Activated B cell treated with CpG ODN at 0.5 μM for 24 hours (primary cell): ENCODE measurements at regions of chr10 and their contacts with region 1.

Region 1: GRCh38 chr10:48656241-48656913 is 28.3 kb upstream of the WDFY4 start:
- DNase-seq: peak; percentile 99
- ATAC-seq: peak; percentile 93
- H3K4me3 Mint-ChIP-seq: peak overlapping the region; percentile 81
- H3K27ac Mint-ChIP-seq: no peak overlapping the region
- H3K4me1 Mint-ChIP-seq: peaks cover 48% of the 10 kb centered on the region
- H3K27me3 Mint-ChIP-seq: peaks cover 6% of the 10 kb centered on the region
- CTCF ChIP-seq: peak; percentile 97

Region 2: GRCh38 chr10:48551861-48552591 is 104.4 kb before region 1 on chr10:
- CTCF ChIA-PET with region 1: interaction called, 301 read pairs
- POLR2A ChIA-PET with region 1: interaction called, 9 read pairs
- intact Hi-C with region 1: loop called (anchors 1 kb)
- DNase-seq: peak; percentile 27
- ATAC-seq: peak; percentile 89
- H3K4me3 Mint-ChIP-seq: no peak overlapping the region
- H3K27ac Mint-ChIP-seq: no peak overlapping the region
- H3K4me1 Mint-ChIP-seq: peaks cover 11% of the 10 kb centered on the region
- H3K27me3 Mint-ChIP-seq: peaks cover 5% of the 10 kb centered on the region
- CTCF ChIP-seq: no peak

Region 3: GRCh38 chr10:48623607-48624132 is 32.7 kb before region 1 on chr10:
- CTCF ChIA-PET with region 1: interaction called, 46 read pairs
- POLR2A ChIA-PET with region 1: interaction called, 9 read pairs
- intact Hi-C with region 1: no loop called
- DNase-seq: no peak
- ATAC-seq: no peak
- H3K4me3 Mint-ChIP-seq: no peak overlapping the region
- H3K27ac Mint-ChIP-seq: no peak overlapping the region
- H3K4me1 Mint-ChIP-seq: peaks cover 36% of the 10 kb centered on the region
- H3K27me3 Mint-ChIP-seq: peaks cover 1% of the 10 kb centered on the region
- CTCF ChIP-seq: no peak

Region 4: DNA sequence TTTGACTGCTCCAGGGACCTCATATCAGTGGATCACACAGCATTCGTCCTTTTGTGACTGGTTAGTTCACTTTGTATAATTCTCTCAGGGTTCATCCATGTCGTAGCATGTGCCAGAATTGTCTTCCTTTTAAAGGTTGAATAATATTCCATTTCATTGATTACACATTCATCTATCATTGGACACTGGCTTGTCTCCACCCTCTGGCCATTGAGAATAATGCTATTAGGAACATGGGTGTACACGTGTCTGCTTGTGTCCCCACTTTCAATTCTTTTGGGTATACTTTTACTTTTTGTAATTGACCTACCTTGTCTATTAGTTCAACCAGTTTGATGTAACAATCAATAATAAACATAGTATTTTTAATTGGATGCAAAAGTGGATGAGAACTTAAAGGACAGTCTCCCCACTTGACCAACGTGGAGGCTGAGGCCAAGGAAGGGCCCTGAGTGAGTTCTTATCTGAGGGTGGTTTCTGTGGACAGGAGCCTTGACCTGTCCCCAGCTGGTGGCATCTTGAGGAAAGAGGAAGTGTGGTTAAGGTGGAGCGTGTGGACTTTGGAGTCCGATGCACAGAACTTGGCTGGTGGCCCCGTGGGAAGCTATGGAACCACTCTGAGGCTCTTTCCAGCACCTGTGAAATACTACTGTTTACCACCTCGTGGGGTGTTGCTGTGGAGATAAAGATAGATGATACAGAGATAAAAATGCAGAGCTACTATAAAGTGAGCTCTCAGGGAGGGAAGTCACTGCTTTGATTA is 44.9 kb after region 1 on chr10:
- CTCF ChIA-PET with region 1: interaction called, 228 read pairs
- POLR2A ChIA-PET with region 1: interaction called, 5 read pairs
- intact Hi-C with region 1: loop called (anchors 1 kb)
- DNase-seq: no peak
- ATAC-seq: peak; percentile 44
- H3K4me3 Mint-ChIP-seq: peak overlapping the region; percentile 26
- H3K27ac Mint-ChIP-seq: peak overlapping the region; percentile 80
- H3K4me1 Mint-ChIP-seq: peaks cover 98% of the 10 kb centered on the region
- H3K27me3 Mint-ChIP-seq: no peaks in the 10 kb centered on the region
- CTCF ChIP-seq: no peak

Region 5: DNA sequence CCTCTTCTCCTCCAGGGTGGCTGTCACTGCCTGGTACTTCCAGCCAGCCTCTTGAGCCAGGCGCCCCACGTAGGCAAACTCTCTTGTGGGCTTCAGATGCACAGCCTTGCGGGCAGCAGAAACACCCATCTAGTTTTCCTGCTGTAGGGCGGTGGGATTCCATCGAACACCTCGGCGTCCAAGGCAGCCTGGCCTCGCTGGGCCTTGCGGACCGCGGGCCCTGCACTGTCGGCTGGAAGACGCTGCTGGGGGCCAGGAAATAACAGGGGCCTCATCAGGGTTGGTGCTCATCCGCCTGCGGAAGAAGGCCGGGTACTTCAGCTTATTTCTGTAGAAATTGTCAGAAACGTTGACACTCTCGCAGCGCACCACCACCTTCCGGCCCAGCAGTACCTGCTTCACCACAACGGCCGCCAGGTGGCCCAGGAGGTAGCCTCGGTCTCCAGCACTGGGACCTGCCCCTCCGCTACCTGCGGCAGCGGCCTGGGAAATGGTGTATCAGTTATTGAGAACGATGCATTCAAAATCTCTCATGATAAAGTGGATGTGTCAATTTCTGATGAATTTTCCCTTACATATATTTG is 89.4 kb after region 1 on chr10:
- CTCF ChIA-PET with region 1: interaction called, 15 read pairs
- POLR2A ChIA-PET with region 1: no interaction called
- intact Hi-C with region 1: no loop called
- DNase-seq: no peak
- ATAC-seq: no peak
- H3K4me3 Mint-ChIP-seq: no peak overlapping the region
- H3K27ac Mint-ChIP-seq: no peak overlapping the region
- H3K4me1 Mint-ChIP-seq: peaks cover 55% of the 10 kb centered on the region
- H3K27me3 Mint-ChIP-seq: no peaks in the 10 kb centered on the region
- CTCF ChIP-seq: no peak

Region 6: DNA sequence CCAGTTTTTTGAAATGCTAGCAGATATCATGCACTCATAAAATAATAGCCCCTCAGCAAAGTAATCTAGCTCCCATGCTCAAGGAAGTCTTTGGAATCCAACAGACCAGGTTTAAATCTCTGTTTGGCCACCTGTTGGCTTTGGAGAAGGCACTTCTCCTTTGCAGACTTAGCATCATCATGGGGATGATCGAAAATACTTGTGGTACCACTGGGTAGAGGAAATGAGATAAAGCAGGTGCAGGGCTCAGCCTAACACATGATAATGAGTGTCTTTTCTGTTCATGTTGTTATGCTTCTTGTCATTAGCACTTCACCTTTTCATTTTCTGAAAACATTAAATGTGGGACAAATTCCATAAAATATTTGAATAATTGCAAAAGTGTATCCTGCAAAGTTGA is 215.9 kb after region 1 on chr10:
- CTCF ChIA-PET with region 1: no interaction called
- POLR2A ChIA-PET with region 1: no interaction called
- intact Hi-C with region 1: loop called (anchors 5 kb)
- DNase-seq: no peak
- ATAC-seq: no peak
- H3K4me3 Mint-ChIP-seq: no peak overlapping the region
- H3K27ac Mint-ChIP-seq: peak overlapping the region; percentile 30
- H3K4me1 Mint-ChIP-seq: peaks cover 8% of the 10 kb centered on the region
- H3K27me3 Mint-ChIP-seq: no peaks in the 10 kb centered on the region
- CTCF ChIP-seq: no peak